Activated B cell treated with CpG ODN at 0.5 μM for 24 hours (primary cell): ENCODE measurements at regions of chr7 and their contacts with region 1.

Region 1: GRCh38 chr7:76291343-76292212 is 10.9 kb upstream of the HSPB1 start:
- DNase-seq: peak; percentile 74
- ATAC-seq: peak; percentile 81
- H3K4me3 Mint-ChIP-seq: no peak overlapping the region
- H3K27ac Mint-ChIP-seq: no peak overlapping the region
- H3K4me1 Mint-ChIP-seq: peaks cover 7% of the 10 kb centered on the region
- H3K27me3 Mint-ChIP-seq: peaks cover 9% of the 10 kb centered on the region
- CTCF ChIP-seq: peak; percentile 55

Region 2: DNA sequence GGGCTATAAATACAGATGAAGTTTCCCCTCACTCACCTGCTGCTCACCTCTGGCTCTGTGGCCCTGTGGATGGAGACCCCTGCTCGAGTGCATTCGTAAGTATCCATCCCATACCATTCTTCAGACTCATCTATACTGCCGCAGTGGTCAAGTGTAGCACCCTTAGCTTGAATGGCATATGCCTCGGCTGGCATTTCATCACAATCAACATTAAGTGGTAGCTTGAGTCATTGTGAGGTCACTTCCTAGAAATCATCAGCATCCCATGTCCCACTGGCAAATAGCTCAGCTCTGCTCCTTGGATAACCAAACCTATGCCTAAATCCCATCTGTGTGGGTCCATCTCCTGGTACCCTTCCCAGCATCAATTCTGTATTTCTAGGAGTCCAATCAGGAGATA is 205.5 kb before region 1 on chr7:
- CTCF ChIA-PET with region 1: no interaction called
- POLR2A ChIA-PET with region 1: no interaction called
- intact Hi-C with region 1: no loop called
- DNase-seq: no peak
- ATAC-seq: no peak
- H3K4me3 Mint-ChIP-seq: no peak overlapping the region
- H3K27ac Mint-ChIP-seq: no peak overlapping the region
- H3K4me1 Mint-ChIP-seq: no peaks in the 10 kb centered on the region
- H3K27me3 Mint-ChIP-seq: peaks cover 20% of the 10 kb centered on the region
- CTCF ChIP-seq: no peak

Region 3: DNA sequence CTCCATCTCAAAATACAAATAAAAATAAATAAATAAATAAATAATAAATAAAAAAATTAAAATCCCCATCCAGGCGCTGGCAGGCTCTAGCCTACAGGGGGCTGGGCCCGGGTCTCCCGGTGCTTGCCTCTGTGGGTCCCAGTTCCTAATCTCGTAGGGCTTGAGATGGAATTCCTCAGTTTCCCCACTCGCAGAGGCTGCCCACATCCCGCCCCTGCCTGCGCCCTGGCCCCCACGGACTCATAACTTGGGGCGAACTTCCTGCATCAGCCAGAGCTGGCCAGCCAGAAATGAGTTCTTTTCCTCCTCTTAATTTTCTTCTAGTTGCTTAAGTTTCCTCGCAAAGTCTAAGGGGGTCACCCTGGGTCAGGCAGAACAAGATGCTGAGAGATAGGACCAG is 111.9 kb before region 1 on chr7:
- CTCF ChIA-PET with region 1: no interaction called
- POLR2A ChIA-PET with region 1: no interaction called
- intact Hi-C with region 1: loop called (anchors 1 kb)
- DNase-seq: no peak
- ATAC-seq: no peak
- H3K4me3 Mint-ChIP-seq: no peak overlapping the region
- H3K27ac Mint-ChIP-seq: no peak overlapping the region
- H3K4me1 Mint-ChIP-seq: peaks cover 3% of the 10 kb centered on the region
- H3K27me3 Mint-ChIP-seq: peaks cover 6% of the 10 kb centered on the region
- CTCF ChIP-seq: no peak

Region 4: GRCh38 chr7:76302347-76303201 is 11.0 kb after region 1 on chr7 and contains the start of gene HSPB1:
- CTCF ChIA-PET with region 1: no interaction called
- POLR2A ChIA-PET with region 1: interaction called, 3 read pairs
- intact Hi-C with region 1: loop called (anchors 1 kb)
- DNase-seq: peak; percentile 65
- ATAC-seq: peak; percentile 76
- H3K4me3 Mint-ChIP-seq: peak within 1 kb of the TSS; percentile 90
- H3K27ac Mint-ChIP-seq: peak within 1 kb of the TSS; percentile 81
- H3K4me1 Mint-ChIP-seq: peaks cover 13% of the 10 kb centered on the region
- H3K27me3 Mint-ChIP-seq: no peaks in the 10 kb centered on the region
- CTCF ChIP-seq: no peak
- total RNA-seq, gene HSPB1: 63.4 and 65.6 TPM in 2 replicates